H1 (cell line): ENCODE measurements at regions of chr4 and their contacts with region 1.

Region 1: GRCh38 chr4:15655229-15656037 is at the start of gene FBXL5:
- DNase-seq: peak in 1 of 2 experiments; percentile 82
- H3K4me3 ChIP-seq: peak within 1 kb of the TSS; percentile 82 to 88 (median 86)
- H3K27ac ChIP-seq: peak within 1 kb of the TSS; percentile 100
- H3K4me1 ChIP-seq: peaks cover 2 to 9% (median 5%) of the 10 kb centered on the region in 4 experiments; a peak in 5 of 7 replicates
- H3K27me3 ChIP-seq: no peaks in the 10 kb centered on the region
- CTCF ChIP-seq: no peak
- EP300 ChIP-seq: no peak
- POLR2A ChIP-seq: peak in 1 of 2 experiments; percentile 86; a peak in 2 of 3 replicates
- RAD21 ChIP-seq: no peak
- total RNA-seq, gene FBXL5: 62.7 and 62.8 TPM in 2 replicates

Region 2: DNA sequence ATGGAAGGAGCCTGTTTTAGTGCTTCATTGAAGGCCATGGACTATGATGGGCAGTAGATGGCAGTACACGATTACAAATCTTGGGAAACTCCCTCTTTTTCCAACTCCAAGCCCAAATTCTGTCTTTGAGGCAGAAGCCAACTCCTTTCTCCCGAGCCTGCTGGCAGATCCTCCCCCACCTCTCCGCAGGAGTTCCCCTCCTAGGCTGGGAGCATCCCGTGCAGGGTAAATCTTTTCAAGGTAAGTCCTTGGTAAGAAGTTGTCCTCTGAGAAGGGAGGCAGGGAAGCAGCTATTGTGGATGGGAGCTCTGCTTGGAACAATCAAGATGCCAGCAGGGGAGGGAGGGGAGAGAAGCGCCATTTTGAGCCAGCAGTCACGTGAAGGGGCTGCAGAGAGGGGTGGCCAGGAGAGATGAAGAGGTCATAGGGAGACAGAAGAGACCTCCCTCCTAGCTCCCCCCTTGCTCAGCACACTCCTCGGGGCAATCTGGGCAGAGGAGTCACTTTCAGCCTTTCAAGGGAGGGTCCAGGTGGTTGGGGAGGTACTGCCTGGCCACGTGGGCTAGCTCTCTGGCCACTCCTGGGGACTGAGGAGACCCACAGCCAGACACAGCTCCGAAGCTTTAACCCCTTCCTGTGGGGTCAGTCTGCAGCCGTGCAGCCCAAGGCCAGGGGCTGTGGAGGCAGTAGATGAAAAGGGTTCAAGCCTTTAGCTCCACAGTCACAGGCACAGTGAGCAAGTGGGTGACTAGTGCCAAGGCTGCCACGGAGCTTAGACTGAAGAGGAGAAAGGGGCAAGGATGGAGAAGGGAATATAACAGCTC is 176.1 kb before region 1 on chr4:
- CTCF ChIA-PET with region 1: interaction called, 12 read pairs
- POLR2A ChIA-PET with region 1: interaction called, 52 read pairs
- DNase-seq: peak; percentile 73 to 87
- H3K4me3 ChIP-seq: peak overlapping the region; percentile 40 to 69 (median 66)
- H3K27ac ChIP-seq: peak overlapping the region; percentile 86
- H3K4me1 ChIP-seq: peaks cover 3 to 6% (median 5%) of the 10 kb centered on the region in 4 experiments; a peak in 5 of 7 replicates
- H3K27me3 ChIP-seq: no peaks in the 10 kb centered on the region
- CTCF ChIP-seq: peak in 2 of 3 experiments; percentile 68 to 80; a peak in 3 of 4 replicates
- EP300 ChIP-seq: no peak
- POLR2A ChIP-seq: peak; percentile 55 to 85
- RAD21 ChIP-seq: peak; percentile 89 to 90

Region 3: DNA sequence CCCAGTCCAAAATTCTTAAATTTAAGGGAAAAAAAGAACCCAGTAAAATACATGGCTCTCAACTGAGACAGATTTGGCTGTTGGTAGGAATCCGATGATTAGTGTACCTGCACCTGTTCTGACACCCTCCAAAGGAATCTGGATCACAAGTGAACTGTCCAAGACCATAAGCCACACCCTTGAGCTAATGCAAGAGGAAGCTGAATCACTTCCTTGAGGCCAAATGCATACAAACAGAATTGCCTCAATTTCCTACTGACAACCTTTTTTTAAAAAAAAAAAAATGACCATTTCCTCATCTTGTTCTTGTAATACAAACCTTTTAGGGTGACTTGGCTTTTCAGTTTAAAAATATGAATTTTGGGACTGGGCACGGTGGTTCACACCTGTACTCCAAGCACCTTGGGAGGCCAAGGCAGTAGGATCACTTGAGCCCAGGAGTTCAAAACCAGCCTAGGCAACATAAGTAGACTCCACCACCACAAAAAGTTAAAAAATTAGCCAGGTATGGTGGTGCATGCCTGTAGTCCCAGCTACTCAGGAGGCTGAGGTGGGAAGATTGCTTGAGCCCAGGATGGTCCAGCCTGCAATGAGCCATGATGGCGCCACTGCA is 10.4 kb after region 1 on chr4:
- CTCF ChIA-PET with region 1: interaction called, 5 read pairs
- POLR2A ChIA-PET with region 1: interaction called, 14 read pairs
- DNase-seq: no peak
- H3K4me3 ChIP-seq: no peak overlapping the region
- H3K27ac ChIP-seq: no peak overlapping the region
- H3K4me1 ChIP-seq: no peaks in the 10 kb centered on the region
- H3K27me3 ChIP-seq: no peaks in the 10 kb centered on the region
- CTCF ChIP-seq: no peak
- EP300 ChIP-seq: no peak
- POLR2A ChIP-seq: no peak
- RAD21 ChIP-seq: no peak

Region 4: DNA sequence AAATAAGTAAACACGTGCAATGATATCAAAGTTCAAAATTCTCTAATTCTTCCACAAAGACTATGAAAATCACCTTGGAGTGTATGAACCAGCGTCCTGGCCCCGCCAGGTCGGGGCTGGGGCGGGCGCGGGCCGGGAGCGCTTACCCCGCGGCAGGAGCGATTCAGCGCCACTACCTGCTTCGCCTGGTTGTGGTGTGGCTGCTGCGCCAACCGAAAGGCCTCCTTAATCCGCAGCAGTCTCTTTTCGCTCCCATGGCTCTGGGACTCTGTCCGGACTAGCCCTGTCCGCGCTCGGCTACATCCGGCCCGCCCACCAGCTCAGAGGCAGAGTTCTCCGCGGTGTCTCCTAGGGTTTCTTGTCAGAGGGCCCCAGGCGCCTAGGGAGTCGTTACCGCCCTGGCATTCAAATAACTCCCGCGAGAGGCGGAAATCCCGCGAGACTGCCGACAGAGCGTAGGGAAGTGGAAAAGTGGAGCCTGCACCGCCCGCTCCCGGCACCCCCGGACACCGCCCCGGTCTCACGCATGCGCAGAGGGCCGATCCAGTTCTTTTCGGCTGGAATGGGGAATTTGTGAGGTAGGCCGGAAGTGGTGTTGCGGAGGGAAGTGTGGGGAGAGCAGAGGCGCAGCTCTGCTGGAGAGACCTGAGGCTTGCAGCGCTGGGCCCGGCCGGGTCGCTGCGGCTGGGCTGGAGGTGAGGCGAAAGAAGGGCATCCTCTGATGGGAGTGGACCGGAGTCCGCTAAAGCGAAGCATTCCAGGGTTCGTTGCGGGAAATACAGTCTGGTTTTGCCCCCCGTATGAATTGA is 26.0 kb after region 1 on chr4 and contains the start of gene FAM200B:
- CTCF ChIA-PET with region 1: interaction called, 6 read pairs
- POLR2A ChIA-PET with region 1: interaction called, 64 read pairs
- DNase-seq: peak; percentile 99 to 100
- H3K4me3 ChIP-seq: peak within 1 kb of the TSS; percentile 86 to 97 (median 91)
- H3K27ac ChIP-seq: peak within 1 kb of the TSS; percentile 91
- H3K4me1 ChIP-seq: peaks cover 2 to 15% (median 12%) of the 10 kb centered on the region in 4 experiments; a peak in 4 of 7 replicates
- H3K27me3 ChIP-seq: no peaks in the 10 kb centered on the region
- CTCF ChIP-seq: peak in 1 of 3 experiments; percentile 26; a peak in 1 of 4 replicates
- EP300 ChIP-seq: no peak
- POLR2A ChIP-seq: peak; percentile 88 to 90
- RAD21 ChIP-seq: peak in 1 of 2 experiments; percentile 22; a peak in 2 of 4 replicates
- total RNA-seq, gene FAM200B: 21.9 and 23.7 TPM in 2 replicates

Region 5: GRCh38 chr4:16450724-16451123 is 795.3 kb after region 1 on chr4:
- CTCF ChIA-PET with region 1: no interaction called
- POLR2A ChIA-PET with region 1: no interaction called
- DNase-seq: no peak
- H3K4me3 ChIP-seq: no peak overlapping the region
- H3K27ac ChIP-seq: no peak overlapping the region
- H3K4me1 ChIP-seq: no peaks in the 10 kb centered on the region; a peak in 2 of 7 replicates
- H3K27me3 ChIP-seq: peaks cover 17 to 45% (median 26%) of the 10 kb centered on the region in 4 experiments
- CTCF ChIP-seq: peak in 2 of 3 experiments; percentile 8 to 13; a peak in 2 of 4 replicates
- EP300 ChIP-seq: no peak
- POLR2A ChIP-seq: no peak
- RAD21 ChIP-seq: peak; percentile 62 to 72